Panc1 (cell line): ENCODE measurements at regions of chr2 and their contacts with region 1.

Region 1: GRCh38 chr2:237987268-237987667 is 20.5 kb downstream of the UBE2F start:
- DNase-seq: no peak
- ATAC-seq: no peak
- H3K4me3 ChIP-seq: no peak overlapping the region
- H3K27ac ChIP-seq: no peak overlapping the region
- H3K4me1 ChIP-seq: no peaks in the 10 kb centered on the region
- H3K27me3 ChIP-seq: no peaks in the 10 kb centered on the region
- CTCF ChIP-seq: no peak

Region 2: DNA sequence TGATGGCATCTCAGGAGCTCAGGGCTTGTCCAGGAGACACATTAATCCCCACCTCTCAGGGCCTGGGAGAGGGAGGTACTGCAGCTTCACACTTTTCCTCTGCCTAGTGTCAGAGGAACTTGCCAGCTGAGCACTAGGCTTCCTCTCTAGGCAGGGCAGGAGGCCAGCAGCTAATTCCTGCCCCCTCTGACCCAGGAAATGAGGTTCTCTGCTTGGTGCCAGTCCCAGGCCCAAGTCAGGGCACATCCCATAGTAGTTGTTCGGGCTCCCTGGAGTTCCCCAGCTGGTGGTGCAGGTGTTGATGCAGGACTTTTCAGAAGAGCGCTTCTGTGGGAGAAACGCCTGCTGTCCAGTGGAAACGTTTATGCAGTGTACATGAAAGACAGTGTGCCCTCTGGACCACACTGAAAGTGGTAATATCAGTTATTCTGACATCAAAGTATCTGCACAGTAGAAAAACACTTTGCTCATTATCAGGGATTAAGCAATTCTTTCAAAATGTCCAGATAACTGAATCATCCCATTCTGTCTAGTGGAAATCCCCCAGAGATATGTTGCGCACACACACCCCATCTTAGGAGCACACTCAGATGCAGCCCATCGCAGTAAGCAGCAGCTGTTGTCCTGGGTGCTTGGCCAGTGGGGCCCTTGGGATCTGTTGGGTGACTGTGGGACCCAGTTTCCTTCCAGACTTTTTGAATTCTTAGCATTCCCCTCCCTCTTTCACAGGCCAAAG is 55.7 kb after region 1 on chr2:
- CTCF ChIA-PET with region 1: no interaction called
- POLR2A ChIA-PET with region 1: no interaction called
- in situ Hi-C with region 1: no loop called
- intact Hi-C with region 1: no loop called
- DNase-seq: no peak
- ATAC-seq: no peak
- H3K4me3 ChIP-seq: no peak overlapping the region
- H3K27ac ChIP-seq: no peak overlapping the region
- H3K4me1 ChIP-seq: no peaks in the 10 kb centered on the region
- H3K27me3 ChIP-seq: no peaks in the 10 kb centered on the region
- CTCF ChIP-seq: no peak

Region 3: DNA sequence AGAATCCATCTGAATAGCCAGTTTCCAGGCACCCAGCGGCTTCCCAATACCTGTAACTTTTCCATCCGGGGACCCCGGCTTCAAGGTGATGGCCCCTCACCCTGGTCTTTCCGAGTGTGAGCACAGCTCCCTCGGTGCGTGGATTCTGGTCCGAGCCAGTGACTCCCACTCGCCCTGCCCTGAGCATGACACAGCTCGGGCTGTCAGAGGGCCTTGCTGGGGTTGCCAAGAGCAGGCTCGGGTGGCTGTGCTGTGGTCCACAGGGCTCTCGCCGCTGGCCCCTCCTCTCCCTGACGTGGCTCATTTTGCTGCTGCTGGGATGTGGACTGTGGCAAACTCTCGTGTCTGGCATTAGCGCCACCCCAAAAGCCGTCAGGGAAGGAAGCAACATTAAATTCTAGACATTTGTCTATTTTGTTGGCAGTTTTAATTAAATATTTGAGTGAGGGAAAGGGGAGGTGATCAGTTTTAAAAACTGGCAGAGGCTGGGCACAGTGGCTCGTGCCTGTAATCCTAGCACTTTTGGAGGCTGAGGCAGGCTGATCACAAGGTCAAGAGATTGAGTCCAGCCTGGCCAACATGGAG is 107.3 kb after region 1 on chr2:
- CTCF ChIA-PET with region 1: no interaction called
- POLR2A ChIA-PET with region 1: interaction called, 10 read pairs
- in situ Hi-C with region 1: no loop called
- intact Hi-C with region 1: no loop called
- DNase-seq: no peak
- ATAC-seq: no peak
- H3K4me3 ChIP-seq: no peak overlapping the region
- H3K27ac ChIP-seq: no peak overlapping the region
- H3K4me1 ChIP-seq: peaks cover 7% of the 10 kb centered on the region; the same call in 1 of the 2 replicates
- H3K27me3 ChIP-seq: no peaks in the 10 kb centered on the region
- CTCF ChIP-seq: no peak

Region 4: GRCh38 chr2:238152771-238153688 is 165.8 kb after region 1 on chr2:
- CTCF ChIA-PET with region 1: interaction called, 13 read pairs
- POLR2A ChIA-PET with region 1: no interaction called
- in situ Hi-C with region 1: no loop called
- intact Hi-C with region 1: no loop called
- DNase-seq: no peak
- ATAC-seq: no peak
- H3K4me3 ChIP-seq: no peak overlapping the region
- H3K27ac ChIP-seq: no peak overlapping the region
- H3K4me1 ChIP-seq: no peaks in the 10 kb centered on the region; the same call in 1 of the 2 replicates
- H3K27me3 ChIP-seq: no peaks in the 10 kb centered on the region
- CTCF ChIP-seq: no peak